AG04450 (cell line): ENCODE measurements at regions of chr11 and their contacts with region 1.

Region 1: GRCh38 chr11:126194121-126194543 is 17.3 kb downstream of the RPUSD4 start:
- DNase-seq: no peak
- H3K4me3 ChIP-seq: no peak overlapping the region
- H3K27ac ChIP-seq: no peak overlapping the region
- H3K27me3 ChIP-seq: no peaks in the 10 kb centered on the region
- CTCF ChIP-seq: peak; percentile 70

Region 2: DNA sequence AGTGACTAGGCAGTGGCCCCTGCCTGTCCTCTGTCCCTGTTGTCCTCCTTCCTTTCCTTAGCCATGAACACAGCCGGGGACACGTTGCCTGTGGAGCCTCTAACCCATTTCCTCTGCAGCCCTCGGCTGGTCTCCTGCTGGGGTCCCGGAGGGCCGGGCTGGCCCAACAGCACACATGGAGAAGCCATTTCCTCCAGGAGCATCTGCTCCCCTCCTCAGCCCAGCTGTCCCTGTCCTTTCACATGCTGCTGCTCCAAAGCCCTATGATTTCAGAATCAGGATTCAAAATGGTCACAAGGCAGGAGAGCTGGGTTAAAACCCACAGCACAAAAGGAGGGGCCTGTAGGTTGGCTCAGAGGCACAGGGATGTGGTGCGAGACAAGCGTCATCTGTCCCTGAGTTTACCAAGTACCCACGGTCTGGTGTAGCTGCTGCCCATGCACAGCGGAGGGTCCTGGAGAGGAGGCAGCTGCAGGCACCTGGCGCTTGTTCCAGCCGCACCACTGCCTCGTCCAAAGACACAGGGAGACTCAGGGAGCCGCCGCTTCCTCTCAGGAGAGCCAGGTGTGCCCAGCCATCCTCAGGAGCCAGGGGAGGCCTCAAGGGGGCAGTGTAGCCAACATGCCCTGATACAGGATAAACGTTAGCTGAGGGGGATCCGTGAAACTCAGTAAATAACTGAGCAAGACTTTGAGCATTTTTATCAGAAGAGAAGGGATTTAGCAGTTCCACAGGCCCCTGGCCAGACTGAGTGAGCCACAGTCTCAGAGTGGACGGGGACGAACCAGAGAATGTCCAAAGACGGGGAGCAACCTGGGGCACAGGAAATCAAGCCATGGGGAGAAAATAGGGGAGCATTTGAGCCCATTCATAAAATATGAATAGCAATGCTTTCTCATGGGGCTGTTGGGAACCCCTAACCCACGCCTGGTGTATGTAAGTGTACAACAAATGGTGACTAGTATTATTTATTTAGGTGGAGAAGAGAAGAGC is 252.2 kb before region 1 on chr11:
- CTCF ChIA-PET with region 1: interaction called, 42 read pairs
- POLR2A ChIA-PET with region 1: no interaction called
- DNase-seq: no peak
- H3K4me3 ChIP-seq: no peak overlapping the region
- H3K27ac ChIP-seq: no peak overlapping the region
- H3K27me3 ChIP-seq: peaks cover 22% of the 10 kb centered on the region
- CTCF ChIP-seq: peak; percentile 67

Region 3: GRCh38 chr11:126224647-126225294 is 30.6 kb after region 1 on chr11:
- CTCF ChIA-PET with region 1: no interaction called
- POLR2A ChIA-PET with region 1: no interaction called
- DNase-seq: no peak
- H3K4me3 ChIP-seq: no peak overlapping the region
- H3K27ac ChIP-seq: no peak overlapping the region
- H3K27me3 ChIP-seq: no peaks in the 10 kb centered on the region
- CTCF ChIP-seq: no peak